ENCODE measurements at regions of chr14 and their contacts with region 1.

Region 1: DNA sequence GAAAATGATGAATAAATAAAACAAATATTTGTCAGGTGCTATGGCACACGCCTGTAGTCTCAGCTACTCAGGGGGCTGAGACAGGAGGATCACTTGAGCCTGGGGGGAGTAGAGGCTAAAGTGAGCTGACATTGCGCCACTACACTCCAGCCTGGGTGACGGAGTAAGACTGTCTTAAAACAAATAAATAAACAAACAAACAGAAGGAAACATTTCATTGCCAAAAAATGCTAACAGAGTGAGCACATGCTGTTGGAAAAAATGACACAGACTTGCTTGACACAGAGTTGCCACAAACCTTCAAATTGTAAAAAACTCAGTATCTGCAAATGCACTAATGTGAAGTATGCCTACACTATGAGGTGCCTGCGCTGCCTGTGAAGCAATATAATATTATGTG is 50.8 kb upstream of the AP4S1 start:
- DNase-seq: peak; percentile 34
- ATAC-seq: peak; percentile 29
- H3K4me3 ChIP-seq: no peak overlapping the region
- H3K27ac ChIP-seq: no peak overlapping the region
- H3K4me1 ChIP-seq: peaks cover 2% of the 10 kb centered on the region; the same call in 1 of the 2 replicates
- H3K27me3 ChIP-seq: no peaks in the 10 kb centered on the region
- CTCF ChIP-seq: no peak
- POLR2A ChIP-seq: no peak
- RAD21 ChIP-seq: no peak

Region 2: DNA sequence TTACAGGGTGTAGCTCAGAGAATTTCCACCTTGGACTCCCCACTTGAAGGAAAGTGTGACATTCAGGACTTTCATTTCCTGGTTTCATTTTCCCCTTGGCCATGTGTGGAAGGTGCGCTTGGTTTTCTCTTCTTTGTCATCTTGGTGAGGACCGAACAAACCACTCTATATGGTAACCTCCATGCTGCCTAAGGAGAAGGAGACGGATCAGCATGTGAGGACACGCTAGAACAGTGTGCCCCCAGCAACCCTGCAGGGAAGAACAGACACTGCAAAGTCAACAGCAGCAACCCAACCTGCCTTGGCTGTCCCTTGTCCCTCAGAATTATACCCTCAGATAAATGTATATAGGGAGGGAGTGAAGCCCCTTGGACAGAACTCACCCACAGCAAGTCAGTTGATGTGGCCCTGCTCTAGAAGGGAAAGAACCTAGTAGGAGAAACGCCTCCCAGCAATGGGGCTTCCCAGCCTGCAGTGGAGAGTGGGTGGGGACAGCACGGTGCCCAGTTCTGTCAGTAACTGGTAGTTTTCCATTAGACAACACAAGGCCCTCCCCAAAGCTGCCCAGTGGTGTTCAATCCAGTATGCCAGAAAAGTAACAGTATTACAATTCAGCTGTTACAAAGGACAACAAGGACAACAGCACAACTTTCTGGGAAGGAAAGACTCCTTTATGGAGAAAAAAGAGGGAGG is 119.1 kb before region 1 on chr14:
- CTCF ChIA-PET with region 1: no interaction called
- POLR2A ChIA-PET with region 1: no interaction called
- dilution Hi-C with region 1: no loop called
- in situ Hi-C with region 1: no loop called
- intact Hi-C with region 1: no loop called
- DNase-seq: no peak
- ATAC-seq: no peak
- H3K4me3 ChIP-seq: no peak overlapping the region
- H3K27ac ChIP-seq: no peak overlapping the region
- H3K4me1 ChIP-seq: no peaks in the 10 kb centered on the region
- H3K27me3 ChIP-seq: peaks cover 6% of the 10 kb centered on the region; the same call in 1 of the 2 replicates
- CTCF ChIP-seq: no peak
- POLR2A ChIP-seq: no peak
- RAD21 ChIP-seq: no peak

Region 3: GRCh38 chr14:30928462-30928861 is 46.2 kb before region 1 on chr14:
- CTCF ChIA-PET with region 1: no interaction called
- POLR2A ChIA-PET with region 1: no interaction called
- dilution Hi-C with region 1: no loop called
- in situ Hi-C with region 1: no loop called
- intact Hi-C with region 1: loop called (anchors 5 kb)
- DNase-seq: no peak
- ATAC-seq: no peak
- H3K4me3 ChIP-seq: no peak overlapping the region
- H3K27ac ChIP-seq: no peak overlapping the region
- H3K4me1 ChIP-seq: no peaks in the 10 kb centered on the region
- H3K27me3 ChIP-seq: no peaks in the 10 kb centered on the region
- CTCF ChIP-seq: no peak
- POLR2A ChIP-seq: no peak
- RAD21 ChIP-seq: no peak

Region 4: GRCh38 chr14:30988509-30988908 is 13.9 kb after region 1 on chr14:
- CTCF ChIA-PET with region 1: no interaction called
- POLR2A ChIA-PET with region 1: no interaction called
- dilution Hi-C with region 1: no loop called
- in situ Hi-C with region 1: no loop called
- intact Hi-C with region 1: loop called (anchors 1 kb)
- DNase-seq: peak; percentile 61
- ATAC-seq: peak; percentile 54
- H3K4me3 ChIP-seq: no peak overlapping the region
- H3K27ac ChIP-seq: no peak overlapping the region
- H3K4me1 ChIP-seq: peaks cover 7% of the 10 kb centered on the region
- H3K27me3 ChIP-seq: no peaks in the 10 kb centered on the region
- CTCF ChIP-seq: no peak
- POLR2A ChIP-seq: no peak
- RAD21 ChIP-seq: no peak

Region 5: DNA sequence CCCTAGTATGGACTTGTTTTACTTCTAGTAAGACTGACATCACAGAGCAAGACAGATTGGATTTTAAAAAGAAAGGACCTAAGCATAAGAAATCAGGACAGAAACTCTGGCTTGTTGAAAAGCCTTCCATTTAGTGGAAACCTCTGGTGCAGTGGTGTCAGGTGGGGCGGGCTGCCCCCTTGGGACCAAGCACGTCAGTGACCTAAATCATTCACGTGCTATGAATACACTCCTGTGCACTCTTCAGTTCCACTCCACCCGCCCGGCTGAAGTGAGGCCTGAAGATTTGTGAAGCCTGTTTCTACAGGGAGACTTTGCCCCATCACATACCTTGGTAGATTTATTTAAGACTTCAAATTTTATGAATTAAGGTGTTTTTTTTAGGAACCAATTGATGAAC is 109.8 kb after region 1 on chr14:
- CTCF ChIA-PET with region 1: no interaction called
- POLR2A ChIA-PET with region 1: no interaction called
- dilution Hi-C with region 1: no loop called
- in situ Hi-C with region 1: loop called (anchors 5 kb)
- intact Hi-C with region 1: no loop called
- DNase-seq: no peak
- ATAC-seq: no peak
- H3K4me3 ChIP-seq: no peak overlapping the region
- H3K27ac ChIP-seq: no peak overlapping the region
- H3K4me1 ChIP-seq: no peaks in the 10 kb centered on the region
- H3K27me3 ChIP-seq: no peaks in the 10 kb centered on the region
- CTCF ChIP-seq: no peak
- POLR2A ChIP-seq: no peak
- RAD21 ChIP-seq: no peak

Measured in IMR-90 (cell line).